WTC11 (cell line): ENCODE measurements at regions of chr10 and their contacts with region 1.

Region 1: DNA sequence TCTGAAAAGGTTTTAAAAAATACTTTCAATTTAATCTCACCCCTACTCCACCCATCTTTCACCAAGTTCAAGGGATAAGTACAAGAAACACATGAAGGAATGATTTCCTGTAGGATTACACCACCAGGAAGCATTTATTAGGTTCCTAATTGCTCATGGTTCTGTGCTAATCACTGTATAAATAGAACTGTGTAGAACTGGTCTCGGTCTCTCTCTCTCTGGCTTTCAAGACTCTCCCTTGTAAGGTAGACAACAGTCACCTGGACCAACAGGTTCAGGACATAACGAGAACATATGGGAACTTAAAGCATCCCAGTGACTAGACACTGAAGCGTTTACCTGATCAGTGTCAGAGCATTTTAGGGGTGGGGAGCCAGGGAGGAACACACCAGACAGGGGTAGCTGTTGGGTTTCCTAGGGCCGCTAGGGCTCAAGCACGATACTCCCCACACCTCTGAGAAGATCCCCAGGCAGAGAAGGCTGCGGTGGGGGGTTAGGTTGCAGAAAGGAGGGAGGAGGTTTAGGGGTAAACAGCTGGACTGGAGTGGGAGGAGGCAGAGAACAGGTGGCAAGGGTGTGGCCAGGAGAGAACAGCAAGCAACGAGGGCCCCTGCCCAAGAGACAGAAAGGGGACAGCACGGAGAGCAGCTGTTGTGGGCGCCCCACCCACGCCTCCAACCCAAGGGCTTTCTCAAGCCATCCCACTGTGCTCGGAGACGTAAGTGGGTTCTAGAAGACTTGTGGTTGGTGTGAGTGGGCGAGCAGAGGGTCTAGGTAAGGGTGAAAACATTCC is 52.5 kb upstream of the USP6NL start:
- DNase-seq: no peak
- ATAC-seq: no peak
- H3K4me3 Mint-ChIP-seq: no peak overlapping the region
- H3K27ac Mint-ChIP-seq: no peak overlapping the region
- H3K4me1 Mint-ChIP-seq: peaks cover 3% of the 10 kb centered on the region; the same call in 1 of the 2 replicates
- H3K27me3 Mint-ChIP-seq: no peaks in the 10 kb centered on the region
- CTCF ChIP-seq: no peak

Region 2: GRCh38 chr10:11454958-11455566 is 208.9 kb before region 1 on chr10:
- CTCF ChIA-PET with region 1: no interaction called
- POLR2A ChIA-PET with region 1: interaction called, 10 read pairs
- DNase-seq: no peak
- ATAC-seq: peak; percentile 85
- H3K4me3 Mint-ChIP-seq: no peak overlapping the region
- H3K27ac Mint-ChIP-seq: no peak overlapping the region
- H3K4me1 Mint-ChIP-seq: peaks cover 11% of the 10 kb centered on the region
- H3K27me3 Mint-ChIP-seq: no peaks in the 10 kb centered on the region
- CTCF ChIP-seq: peak; percentile 24; the same call in 1 of the 2 replicates

Region 3: DNA sequence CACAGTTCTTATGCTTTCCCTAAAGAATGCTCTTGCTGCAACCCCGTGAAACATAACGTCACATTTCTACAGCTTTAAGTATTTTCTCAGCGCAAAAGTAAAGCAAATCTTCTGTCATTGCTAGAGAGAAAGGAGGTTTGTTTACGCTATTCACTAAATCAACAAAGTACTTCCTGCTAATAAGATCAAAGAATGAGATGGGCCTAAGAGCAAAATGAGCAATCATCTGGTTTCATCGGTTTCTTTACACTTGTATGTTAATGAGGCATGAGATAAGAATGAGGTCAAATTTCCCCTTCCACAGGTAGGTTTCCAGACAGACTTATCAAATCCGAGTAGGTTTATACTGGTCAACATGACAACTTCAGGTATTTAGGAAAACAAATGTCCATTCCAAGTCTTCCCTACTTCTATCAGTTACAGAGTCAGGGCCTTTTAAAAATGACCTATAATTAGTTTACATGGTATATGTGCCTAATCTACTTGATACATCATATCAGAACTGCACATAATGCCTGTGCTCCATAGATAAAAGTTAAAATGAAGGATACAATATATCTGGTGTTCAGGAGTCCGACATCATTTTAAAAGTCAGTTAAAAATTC is 60.9 kb before region 1 on chr10:
- CTCF ChIA-PET with region 1: no interaction called
- POLR2A ChIA-PET with region 1: no interaction called
- DNase-seq: no peak
- ATAC-seq: no peak
- H3K4me3 Mint-ChIP-seq: peak overlapping the region; percentile 37
- H3K27ac Mint-ChIP-seq: peak overlapping the region; percentile 58
- H3K4me1 Mint-ChIP-seq: peaks cover 55% of the 10 kb centered on the region
- H3K27me3 Mint-ChIP-seq: no peaks in the 10 kb centered on the region
- CTCF ChIP-seq: no peak

Region 4: DNA sequence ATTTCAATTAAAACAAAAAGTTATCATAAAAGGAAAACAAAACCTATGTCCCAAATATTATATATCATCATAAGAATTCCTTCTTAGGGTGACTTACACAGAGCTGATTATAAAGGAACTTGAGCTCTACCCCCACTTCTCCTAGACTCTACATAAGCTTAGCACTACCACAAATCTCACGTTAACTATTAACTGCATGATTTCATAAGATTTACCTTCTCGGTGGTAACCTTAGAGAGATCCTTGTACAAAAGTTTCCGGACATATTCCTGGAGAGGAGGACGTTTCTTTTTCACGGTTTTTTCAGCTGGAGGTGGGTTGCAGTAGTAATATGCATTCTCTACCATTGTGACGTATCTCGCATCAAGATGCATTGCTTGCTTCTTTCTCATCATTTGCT is 295.0 kb after region 1 on chr10:
- CTCF ChIA-PET with region 1: no interaction called
- POLR2A ChIA-PET with region 1: no interaction called
- DNase-seq: no peak
- ATAC-seq: no peak
- H3K4me3 Mint-ChIP-seq: no peak overlapping the region
- H3K27ac Mint-ChIP-seq: no peak overlapping the region
- H3K4me1 Mint-ChIP-seq: no peaks in the 10 kb centered on the region
- H3K27me3 Mint-ChIP-seq: no peaks in the 10 kb centered on the region
- CTCF ChIP-seq: no peak